ENCODE measurements at regions of chr4 and their contacts with region 1.

Region 1: GRCh38 chr4:156968479-156968984 is 3.1 kb downstream of the PDGFC start:
- DNase-seq: peak; percentile 83

Region 2: GRCh38 chr4:156475322-156475721 is 493.2 kb before region 1 on chr4:
- intact Hi-C with region 1: loop called in 1 of 2 experiments (anchors 10 kb)
- DNase-seq: no peak

Region 3: GRCh38 chr4:156858071-156858470 is 110.5 kb before region 1 on chr4:
- intact Hi-C with region 1: no loop called
- DNase-seq: no peak

Region 4: DNA sequence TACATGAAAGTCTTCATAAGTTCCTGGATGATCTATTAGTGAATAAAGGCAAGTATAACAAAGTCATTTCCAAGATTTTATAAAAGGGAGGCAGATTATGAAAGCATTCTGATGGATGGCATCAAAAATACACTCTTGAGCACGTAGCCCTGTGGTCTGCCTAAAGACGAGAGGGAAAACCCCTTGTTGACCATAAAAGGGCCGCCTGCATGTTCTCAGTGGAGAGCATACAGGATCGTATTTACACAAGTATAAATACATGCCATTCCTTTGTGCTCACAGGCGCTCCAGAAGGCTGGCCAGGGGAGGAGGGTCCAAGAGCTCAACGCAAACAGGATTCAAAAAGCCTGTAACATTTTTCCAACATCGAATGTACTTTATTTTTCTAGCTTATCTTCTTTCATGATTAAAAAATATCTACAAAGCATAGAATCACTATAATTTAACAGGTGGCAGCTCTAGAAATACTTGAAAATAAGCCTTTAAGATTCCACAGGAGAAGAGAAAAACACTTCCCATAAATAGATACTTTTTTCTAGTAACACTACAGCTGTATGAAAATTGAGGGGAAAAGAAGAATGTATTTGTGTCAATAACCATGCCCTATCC is 26.5 kb before region 1 on chr4:
- intact Hi-C with region 1: no loop called
- DNase-seq: peak; percentile 69